HepG2 (cell line): ENCODE measurements at regions of chr5 and their contacts with region 1.

Region 1: DNA sequence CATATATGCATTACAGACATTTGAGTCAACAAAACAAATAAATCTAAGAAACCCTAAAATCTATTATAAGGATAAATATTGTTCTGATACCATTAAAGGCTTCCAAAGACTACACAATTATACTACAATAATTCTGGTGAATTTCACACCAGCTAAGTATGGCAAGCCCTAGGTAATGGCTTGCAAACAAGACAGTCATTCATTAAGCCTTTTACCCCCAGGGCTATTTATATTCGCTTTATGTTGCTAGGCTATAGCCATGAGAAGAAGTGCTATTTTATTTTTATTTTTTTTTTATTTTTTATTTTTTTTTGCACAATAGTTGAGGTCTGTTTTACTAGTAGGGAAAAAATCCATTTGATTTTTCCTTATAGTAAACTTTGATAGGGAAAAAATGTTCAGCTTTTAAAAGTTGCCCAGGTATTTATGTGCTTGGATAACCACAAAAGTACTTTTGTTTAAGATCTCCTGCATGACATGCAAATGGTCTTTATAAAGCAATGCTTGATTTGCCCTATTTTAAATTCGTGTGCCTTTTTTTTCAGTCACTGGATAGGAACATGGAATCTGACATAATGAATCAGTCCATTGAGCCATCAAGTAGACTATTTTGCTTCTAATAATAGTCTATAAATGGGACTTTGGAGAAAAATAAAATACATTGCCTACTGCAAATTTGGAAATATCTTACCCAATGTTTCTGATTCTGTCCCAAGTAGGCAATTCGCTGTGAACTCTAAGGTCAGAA is 946.3 kb upstream of the COX7C start:
- DNase-seq: no peak
- ATAC-seq: no peak
- H3K4me3 ChIP-seq: no peak overlapping the region
- H3K27ac ChIP-seq: no peak overlapping the region
- H3K4me1 ChIP-seq: peaks cover 13% of the 10 kb centered on the region
- H3K27me3 ChIP-seq: no peaks in the 10 kb centered on the region
- CTCF ChIP-seq: no peak
- EP300 ChIP-seq: no peak
- POLR2A ChIP-seq: no peak
- RAD21 ChIP-seq: no peak

Region 2: DNA sequence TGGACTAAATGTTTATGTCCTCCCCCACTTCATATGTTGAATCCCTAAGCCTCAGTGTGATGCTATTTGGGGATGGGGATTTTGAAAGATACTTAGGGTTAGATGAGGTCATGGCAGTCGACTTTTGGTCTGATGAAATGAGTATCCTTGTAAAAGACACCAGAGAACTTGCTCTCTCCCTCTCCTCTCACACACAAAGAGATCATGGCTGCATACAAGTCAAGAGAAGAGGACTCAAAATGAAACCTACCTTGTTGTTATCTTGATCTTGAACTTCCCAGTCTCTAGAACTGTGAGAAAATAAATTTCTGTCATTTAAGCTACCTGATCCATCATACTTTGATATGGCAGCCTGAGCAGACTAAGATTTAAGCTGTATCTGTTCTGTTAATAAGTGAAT is 1806.7 kb before region 1 on chr5:
- CTCF ChIA-PET with region 1: no interaction called
- POLR2A ChIA-PET with region 1: no interaction called
- in situ Hi-C with region 1: no loop called
- intact Hi-C with region 1: no loop called
- DNase-seq: no peak
- ATAC-seq: no peak
- H3K4me3 ChIP-seq: no peak overlapping the region
- H3K27ac ChIP-seq: no peak overlapping the region
- H3K4me1 ChIP-seq: no peaks in the 10 kb centered on the region
- H3K27me3 ChIP-seq: no peaks in the 10 kb centered on the region
- CTCF ChIP-seq: no peak
- EP300 ChIP-seq: no peak
- POLR2A ChIP-seq: no peak
- RAD21 ChIP-seq: no peak

Region 3: GRCh38 chr5:85388770-85389169 is 282.6 kb before region 1 on chr5:
- CTCF ChIA-PET with region 1: no interaction called
- POLR2A ChIA-PET with region 1: no interaction called
- in situ Hi-C with region 1: no loop called
- intact Hi-C with region 1: no loop called
- DNase-seq: no peak
- ATAC-seq: no peak
- H3K4me3 ChIP-seq: no peak overlapping the region
- H3K27ac ChIP-seq: no peak overlapping the region
- H3K4me1 ChIP-seq: no peaks in the 10 kb centered on the region
- H3K27me3 ChIP-seq: no peaks in the 10 kb centered on the region
- CTCF ChIP-seq: no peak
- EP300 ChIP-seq: no peak
- POLR2A ChIP-seq: no peak
- RAD21 ChIP-seq: no peak

Region 4: GRCh38 chr5:85556464-85556863 is 114.9 kb before region 1 on chr5:
- CTCF ChIA-PET with region 1: no interaction called
- POLR2A ChIA-PET with region 1: no interaction called
- in situ Hi-C with region 1: no loop called
- intact Hi-C with region 1: no loop called
- DNase-seq: no peak
- ATAC-seq: no peak
- H3K4me3 ChIP-seq: no peak overlapping the region
- H3K27ac ChIP-seq: no peak overlapping the region
- H3K4me1 ChIP-seq: no peaks in the 10 kb centered on the region
- H3K27me3 ChIP-seq: no peaks in the 10 kb centered on the region
- CTCF ChIP-seq: no peak
- EP300 ChIP-seq: no peak
- POLR2A ChIP-seq: no peak
- RAD21 ChIP-seq: no peak

Region 5: GRCh38 chr5:85628153-85628552 is 43.2 kb before region 1 on chr5:
- CTCF ChIA-PET with region 1: no interaction called
- POLR2A ChIA-PET with region 1: no interaction called
- in situ Hi-C with region 1: no loop called
- intact Hi-C with region 1: loop called (anchors 5 kb)
- DNase-seq: no peak
- ATAC-seq: no peak
- H3K4me3 ChIP-seq: no peak overlapping the region
- H3K27ac ChIP-seq: no peak overlapping the region
- H3K4me1 ChIP-seq: no peaks in the 10 kb centered on the region
- H3K27me3 ChIP-seq: no peaks in the 10 kb centered on the region; a peak in 1 of 5 replicates
- CTCF ChIP-seq: no peak
- EP300 ChIP-seq: no peak
- POLR2A ChIP-seq: no peak
- RAD21 ChIP-seq: no peak

Region 6: DNA sequence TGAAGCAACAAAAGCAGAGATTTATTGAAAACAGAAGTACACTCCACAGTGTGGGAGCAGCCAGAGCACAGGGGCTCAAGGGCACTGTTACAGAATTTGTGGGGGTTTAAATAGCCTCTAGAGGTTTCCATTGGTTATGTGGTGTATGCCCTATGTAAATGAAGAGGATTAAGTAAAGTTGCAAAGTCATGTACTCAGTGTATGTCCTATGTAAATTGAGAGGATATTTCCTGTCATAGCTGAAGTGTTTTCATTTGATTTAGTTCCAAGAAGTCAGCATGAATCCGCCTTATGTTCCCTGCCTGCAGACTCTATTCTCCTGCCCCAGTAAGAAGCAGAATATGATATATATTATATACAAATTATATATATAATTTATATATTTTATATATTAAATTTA is 19.7 kb before region 1 on chr5:
- CTCF ChIA-PET with region 1: no interaction called
- POLR2A ChIA-PET with region 1: no interaction called
- in situ Hi-C with region 1: no loop called
- intact Hi-C with region 1: no loop called
- DNase-seq: no peak
- ATAC-seq: no peak
- H3K4me3 ChIP-seq: no peak overlapping the region
- H3K27ac ChIP-seq: no peak overlapping the region
- H3K4me1 ChIP-seq: no peaks in the 10 kb centered on the region
- H3K27me3 ChIP-seq: no peaks in the 10 kb centered on the region
- CTCF ChIP-seq: no peak
- EP300 ChIP-seq: no peak
- POLR2A ChIP-seq: no peak
- RAD21 ChIP-seq: no peak